Sciatic nerve (tissue), 2 donors: ENCODE measurements at regions of chr13 and their contacts with region 1.

Region 1: DNA sequence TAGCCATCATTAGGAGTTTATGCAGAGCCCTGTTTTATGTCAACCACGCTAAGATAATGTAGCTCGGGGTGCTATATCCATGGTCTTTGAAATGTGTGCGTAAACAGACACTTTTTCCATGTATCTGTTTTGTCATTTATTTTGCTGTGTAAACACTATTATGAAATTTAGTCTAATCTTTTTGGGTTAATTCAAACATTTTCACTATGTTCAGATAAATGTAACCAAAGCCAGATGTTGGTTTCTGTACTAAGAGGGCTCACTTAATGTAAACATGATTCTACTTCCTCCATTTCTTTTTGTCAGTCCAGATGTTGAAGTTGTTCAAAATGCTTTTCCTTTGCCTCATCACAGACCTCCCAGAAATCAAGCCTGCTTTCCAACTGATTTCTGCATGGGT is 499.5 kb upstream of the GPC6 start:
- DNase-seq: no peak
- ATAC-seq: no peak

Region 2: DNA sequence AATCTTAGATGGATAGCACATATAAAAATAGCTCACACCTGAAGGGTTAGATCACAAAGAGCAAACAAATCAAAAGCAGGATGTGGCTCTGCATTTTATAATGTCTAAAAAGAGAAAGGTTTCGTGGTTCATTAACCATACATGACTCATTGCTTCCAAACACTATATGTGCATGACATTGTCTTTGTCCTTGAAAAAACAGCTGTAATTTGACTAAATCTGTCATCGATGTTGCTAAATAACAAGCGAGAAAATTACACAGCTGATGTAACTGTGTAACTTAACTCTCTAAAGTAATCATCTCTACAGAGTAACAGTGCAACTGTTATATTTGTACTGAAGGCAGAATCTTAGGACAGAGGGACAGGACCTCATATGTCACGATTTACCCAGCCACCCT is 116.4 kb after region 1 on chr13:
- intact Hi-C with region 1: loop called (anchors 5 kb)
- DNase-seq: no peak
- ATAC-seq: no peak